PC-9 (cell line): ENCODE measurements at regions of chr5 and their contacts with region 1.

Region 1: GRCh38 chr5:149011074-149011476 is 51.8 kb downstream of the SH3TC2 start:
- DNase-seq: peak; percentile 92 to 98
- H3K4me3 ChIP-seq: no peak overlapping the region
- H3K27ac ChIP-seq: peak overlapping the region; percentile 96
- H3K4me1 ChIP-seq: peaks cover 48% of the 10 kb centered on the region
- H3K27me3 ChIP-seq: no peaks in the 10 kb centered on the region
- CTCF ChIP-seq: no peak; the same call in 1 of the 2 replicates

Region 2: DNA sequence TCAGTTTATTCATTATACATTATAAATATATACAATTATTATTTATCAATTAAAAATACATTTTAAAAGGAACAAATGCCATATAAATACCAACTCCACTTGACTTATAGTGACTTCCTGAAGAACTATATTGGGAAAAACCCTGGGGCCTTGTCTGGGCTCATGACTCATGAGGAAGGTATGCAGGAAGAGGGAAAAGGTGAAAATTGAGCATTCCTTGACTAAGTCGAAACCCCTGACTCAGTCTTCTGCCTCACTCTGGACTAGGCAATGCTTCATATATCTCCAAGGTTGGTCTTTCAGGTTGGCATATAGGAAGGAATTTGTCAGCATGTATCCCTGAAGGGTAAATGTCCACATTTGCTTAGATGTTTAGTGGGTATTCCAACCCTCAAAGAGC is 26.7 kb before region 1 on chr5:
- CTCF ChIA-PET with region 1: interaction called, 3 read pairs
- POLR2A ChIA-PET with region 1: no interaction called
- intact Hi-C with region 1: loop called (anchors 1 kb)
- DNase-seq: peak; percentile 78 to 94
- H3K4me3 ChIP-seq: peak overlapping the region; percentile 19; the same call in 1 of the 2 replicates
- H3K27ac ChIP-seq: peak overlapping the region; percentile 99
- H3K4me1 ChIP-seq: peaks cover 82% of the 10 kb centered on the region
- H3K27me3 ChIP-seq: no peaks in the 10 kb centered on the region
- CTCF ChIP-seq: no peak

Region 3: GRCh38 chr5:149024477-149024876 is 13.4 kb after region 1 on chr5:
- CTCF ChIA-PET with region 1: interaction called, 4 read pairs
- POLR2A ChIA-PET with region 1: interaction called, 3 read pairs
- intact Hi-C with region 1: loop called (anchors 2 kb)
- DNase-seq: peak; percentile 21 to 54
- H3K4me3 ChIP-seq: no peak overlapping the region
- H3K27ac ChIP-seq: peak overlapping the region; percentile 40
- H3K4me1 ChIP-seq: peaks cover 9% of the 10 kb centered on the region
- H3K27me3 ChIP-seq: no peaks in the 10 kb centered on the region
- CTCF ChIP-seq: no peak

Region 4: GRCh38 chr5:149526845-149527580 is 515.9 kb after region 1 on chr5:
- CTCF ChIA-PET with region 1: no interaction called
- POLR2A ChIA-PET with region 1: no interaction called
- intact Hi-C with region 1: no loop called
- DNase-seq: no peak
- H3K4me3 ChIP-seq: no peak overlapping the region
- H3K27ac ChIP-seq: no peak overlapping the region
- H3K4me1 ChIP-seq: peaks cover 22% of the 10 kb centered on the region
- H3K27me3 ChIP-seq: no peaks in the 10 kb centered on the region
- CTCF ChIP-seq: no peak